MCF 10A (cell line): ENCODE measurements at regions of chr2 and their contacts with region 1.

Region 1: GRCh38 chr2:96951093-96951654 is 35.2 kb downstream of the FAM178B start:
- DNase-seq: peak; percentile 66
- H3K4me3 Mint-ChIP-seq: no peak overlapping the region
- H3K27ac Mint-ChIP-seq: no peak overlapping the region
- H3K4me1 Mint-ChIP-seq: no peaks in the 10 kb centered on the region
- H3K27me3 Mint-ChIP-seq: no peaks in the 10 kb centered on the region
- CTCF ChIP-seq: peak; percentile 90

Region 2: GRCh38 chr2:96856776-96857673 is 94.1 kb before region 1 on chr2:
- CTCF ChIA-PET with region 1: interaction called, 116 read pairs
- POLR2A ChIA-PET with region 1: interaction called, 23 read pairs
- intact Hi-C with region 1: loop called (anchors 1 kb)
- DNase-seq: no peak
- H3K4me3 Mint-ChIP-seq: peak overlapping the region; percentile 60
- H3K27ac Mint-ChIP-seq: peak overlapping the region; percentile 49
- H3K4me1 Mint-ChIP-seq: peaks cover 14% of the 10 kb centered on the region
- H3K27me3 Mint-ChIP-seq: no peaks in the 10 kb centered on the region
- CTCF ChIP-seq: no peak

Region 3: DNA sequence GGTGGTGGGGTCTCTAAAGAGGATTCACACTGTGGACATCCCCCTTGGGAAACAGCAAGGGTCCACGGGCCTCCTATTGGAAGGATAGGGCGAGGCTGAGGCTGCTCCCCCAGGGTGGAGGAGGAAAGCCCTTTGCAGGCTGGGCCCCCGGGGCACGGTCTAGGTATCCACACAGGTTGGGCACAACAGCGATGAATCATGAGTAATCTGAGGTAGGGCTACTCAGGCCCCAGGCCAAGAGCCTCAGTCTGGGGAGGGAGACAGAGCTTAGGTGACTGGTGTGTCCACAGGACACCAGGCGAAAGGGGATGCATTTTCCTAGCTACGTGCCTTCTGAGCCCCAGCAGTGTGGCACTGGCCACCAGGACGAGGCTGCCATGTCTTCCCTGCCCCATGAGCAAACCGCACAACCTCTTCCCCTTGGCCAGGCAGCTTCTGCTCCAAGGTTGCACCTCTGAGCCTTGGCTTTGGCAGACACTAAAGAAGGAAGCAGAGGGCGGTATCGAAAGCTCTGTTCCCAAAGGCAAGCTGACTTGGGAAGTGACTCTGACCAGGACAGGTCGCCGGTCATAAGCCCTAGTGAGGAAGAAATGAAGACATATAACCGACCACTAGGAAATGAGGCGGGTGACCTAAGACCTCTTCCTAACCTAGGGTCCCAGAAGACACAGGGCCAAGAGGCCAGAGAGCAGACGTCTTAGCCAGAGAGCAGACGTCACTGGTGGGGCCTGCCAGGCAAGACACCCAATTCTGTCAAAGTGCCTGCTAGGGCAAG is 66.7 kb before region 1 on chr2:
- CTCF ChIA-PET with region 1: interaction called, 19 read pairs
- POLR2A ChIA-PET with region 1: no interaction called
- intact Hi-C with region 1: no loop called
- DNase-seq: peak; percentile 80
- H3K4me3 Mint-ChIP-seq: no peak overlapping the region
- H3K27ac Mint-ChIP-seq: no peak overlapping the region
- H3K4me1 Mint-ChIP-seq: peaks cover 23% of the 10 kb centered on the region
- H3K27me3 Mint-ChIP-seq: no peaks in the 10 kb centered on the region
- CTCF ChIP-seq: no peak

Region 4: DNA sequence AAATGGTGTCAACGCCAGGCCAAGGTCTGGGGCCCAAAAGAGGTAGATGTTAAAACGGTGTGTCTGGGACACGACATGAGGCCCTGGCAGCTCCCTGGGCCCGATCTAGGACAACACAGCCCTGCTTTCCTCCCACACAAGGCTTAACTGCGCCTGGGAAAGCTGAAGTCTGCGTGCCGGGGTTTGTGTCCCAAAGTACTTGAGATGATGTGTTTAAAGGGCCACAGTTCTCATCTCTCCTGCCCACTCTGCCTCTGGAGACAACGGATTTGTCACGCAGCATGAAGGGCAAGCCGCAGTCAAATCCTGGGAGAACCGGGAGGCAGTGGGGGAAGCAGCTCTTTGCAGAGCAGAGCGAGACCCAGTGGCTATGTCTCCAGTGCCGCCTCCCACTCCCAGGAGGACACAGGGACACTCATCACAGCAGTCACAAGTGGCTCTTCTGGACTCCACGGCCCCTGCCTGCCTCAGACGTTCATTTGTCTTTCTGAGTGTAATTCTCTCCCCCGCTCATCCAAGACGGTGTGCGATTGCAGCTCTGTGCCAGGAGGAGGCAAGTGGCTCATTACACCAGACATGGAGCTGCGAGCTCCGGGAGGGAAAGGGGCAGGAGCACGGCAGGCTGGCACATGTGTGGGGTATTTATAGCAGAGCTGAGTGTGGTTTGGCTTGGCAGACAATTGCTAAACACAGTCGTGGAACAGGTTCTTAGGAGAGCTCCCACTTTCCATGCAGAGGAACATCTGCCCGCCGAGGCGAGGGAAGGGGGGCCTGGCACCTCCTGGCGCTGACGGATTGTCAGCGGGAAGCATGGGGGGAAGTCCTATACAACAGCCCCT is 23.6 kb before region 1 on chr2:
- CTCF ChIA-PET with region 1: interaction called, 18 read pairs
- POLR2A ChIA-PET with region 1: interaction called, 4 read pairs
- intact Hi-C with region 1: no loop called
- DNase-seq: peak; percentile 85
- H3K4me3 Mint-ChIP-seq: peak overlapping the region; percentile 52
- H3K27ac Mint-ChIP-seq: no peak overlapping the region
- H3K4me1 Mint-ChIP-seq: peaks cover 10% of the 10 kb centered on the region
- H3K27me3 Mint-ChIP-seq: peaks cover 41% of the 10 kb centered on the region
- CTCF ChIP-seq: peak; percentile 27

Region 5: GRCh38 chr2:96992266-96992665 is 41.1 kb after region 1 on chr2:
- CTCF ChIA-PET with region 1: no interaction called
- POLR2A ChIA-PET with region 1: no interaction called
- intact Hi-C with region 1: no loop called
- DNase-seq: no peak
- H3K4me3 Mint-ChIP-seq: no peak overlapping the region
- H3K27ac Mint-ChIP-seq: no peak overlapping the region
- H3K4me1 Mint-ChIP-seq: no peaks in the 10 kb centered on the region
- H3K27me3 Mint-ChIP-seq: peaks cover 53% of the 10 kb centered on the region
- CTCF ChIP-seq: no peak